OCI-LY7 (cell line): ENCODE measurements at regions of chr2 and their contacts with region 1.

Region 1: GRCh38 chr2:49154140-49154539 is at the start of gene FSHR:
- DNase-seq: no peak
- H3K4me3 ChIP-seq: no peak within 1 kb of the TSS
- H3K27ac ChIP-seq: no peak within 1 kb of the TSS
- H3K4me1 ChIP-seq: no peaks in the 10 kb centered on the region
- CTCF ChIP-seq: no peak
- total RNA-seq, gene FSHR: not detected in 2 replicates

Region 2: DNA sequence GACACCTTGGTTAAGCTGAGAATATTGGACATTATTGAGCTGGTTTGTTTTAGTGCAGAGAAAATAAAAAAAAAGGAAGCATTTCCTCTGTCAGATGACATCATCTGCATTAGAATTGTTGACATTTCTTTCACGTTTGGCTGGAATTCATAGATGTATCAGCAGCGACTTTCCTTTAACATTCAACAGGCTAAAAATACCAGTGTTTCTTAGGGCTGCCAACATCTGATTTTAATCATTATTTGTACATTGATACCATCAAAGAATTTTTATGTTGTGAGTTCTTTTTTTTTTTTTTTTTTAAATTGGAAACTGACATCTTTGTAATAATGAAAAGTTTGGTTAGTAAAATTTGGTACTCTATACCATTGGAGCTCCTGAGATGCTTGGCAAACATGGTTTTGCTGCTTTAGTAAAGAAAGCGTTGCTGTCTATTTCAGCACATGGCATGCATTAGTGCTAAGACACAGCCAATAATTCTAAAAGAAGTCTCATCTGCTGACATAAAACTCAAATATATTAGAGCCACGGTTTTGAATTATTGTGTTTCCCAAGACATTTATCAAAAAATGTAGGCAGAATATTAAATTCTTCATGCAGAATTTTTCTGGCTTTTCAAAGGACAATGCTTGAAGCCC is 502.9 kb before region 1 on chr2:
- CTCF ChIA-PET with region 1: no interaction called
- POLR2A ChIA-PET with region 1: interaction called, 10 read pairs
- intact Hi-C with region 1: no loop called
- DNase-seq: no peak
- H3K4me3 ChIP-seq: no peak overlapping the region
- H3K27ac ChIP-seq: no peak overlapping the region
- H3K4me1 ChIP-seq: no peaks in the 10 kb centered on the region
- CTCF ChIP-seq: no peak